ENCODE measurements at regions of chr14 and their contacts with region 1.

Region 1: GRCh38 chr14:80850197-80850814 is 91.2 kb downstream of the CEP128 start:
- DNase-seq: no peak
- H3K4me3 ChIP-seq: no peak overlapping the region
- H3K27ac ChIP-seq: no peak overlapping the region
- H3K4me1 ChIP-seq: no peaks in the 10 kb centered on the region
- H3K27me3 ChIP-seq: no peaks in the 10 kb centered on the region
- CTCF ChIP-seq: peak; percentile 27 to 72 (median 65)
- POLR2A ChIP-seq: no peak

Region 2: GRCh38 chr14:78967110-78967809 is 1883.0 kb before region 1 on chr14:
- intact Hi-C with region 1: loop called (anchors 5 kb)
- DNase-seq: no peak
- H3K4me3 ChIP-seq: no peak overlapping the region
- H3K27ac ChIP-seq: no peak overlapping the region
- H3K4me1 ChIP-seq: no peaks in the 10 kb centered on the region
- H3K27me3 ChIP-seq: no peaks in the 10 kb centered on the region
- CTCF ChIP-seq: no peak
- POLR2A ChIP-seq: no peak